Activated T-helper 1 cell treated with anti-CD3 and anti-CD28 coated beads, Interleukin-12 subunit alpha, Interleukin-12 subunit beta, Interleukin-2, Interleukin-4 antibody, amounts not matched to agents 30 ng/mL and 10 ng/mL and 1 ng/mL, durations not matched to agents 14 hours and 24 hours and 36 hours (primary cell): ENCODE measurements at regions of chr20 and their contacts with region 1.

Region 1: GRCh38 chr20:45752746-45753145 is 30.6 kb downstream of the SPINT4 start:
- DNase-seq: no peak
- H3K4me3 Mint-ChIP-seq: no peak overlapping the region
- H3K27ac Mint-ChIP-seq: peak overlapping the region; percentile 85
- H3K4me1 Mint-ChIP-seq: peaks cover 17% of the 10 kb centered on the region
- H3K27me3 Mint-ChIP-seq: peaks cover 7% of the 10 kb centered on the region

Region 2: DNA sequence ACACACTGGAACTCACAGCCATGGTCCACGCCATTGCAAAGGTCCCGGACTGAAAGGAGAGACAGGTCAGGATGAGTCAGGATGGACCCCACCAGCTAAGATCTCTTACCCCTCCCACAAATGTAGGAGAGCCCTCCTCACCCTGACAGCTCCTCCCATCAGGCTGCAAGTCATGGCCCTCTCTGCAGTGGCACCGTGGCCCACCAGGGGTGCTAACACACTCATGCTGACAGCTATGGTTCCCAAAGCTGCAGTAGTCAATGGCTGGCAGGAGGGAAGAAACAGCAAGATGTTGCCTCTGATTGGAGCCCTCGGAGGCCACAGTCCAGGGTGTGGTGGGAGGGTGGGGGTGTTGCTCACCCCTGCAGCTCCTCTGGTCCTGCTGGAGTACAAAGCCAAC is 451.8 kb before region 1 on chr20:
- intact Hi-C with region 1: loop called (anchors 10 kb)
- DNase-seq: no peak
- H3K4me3 Mint-ChIP-seq: no peak overlapping the region
- H3K27ac Mint-ChIP-seq: no peak overlapping the region
- H3K4me1 Mint-ChIP-seq: peaks cover 49% of the 10 kb centered on the region
- H3K27me3 Mint-ChIP-seq: no peaks in the 10 kb centered on the region

Region 3: DNA sequence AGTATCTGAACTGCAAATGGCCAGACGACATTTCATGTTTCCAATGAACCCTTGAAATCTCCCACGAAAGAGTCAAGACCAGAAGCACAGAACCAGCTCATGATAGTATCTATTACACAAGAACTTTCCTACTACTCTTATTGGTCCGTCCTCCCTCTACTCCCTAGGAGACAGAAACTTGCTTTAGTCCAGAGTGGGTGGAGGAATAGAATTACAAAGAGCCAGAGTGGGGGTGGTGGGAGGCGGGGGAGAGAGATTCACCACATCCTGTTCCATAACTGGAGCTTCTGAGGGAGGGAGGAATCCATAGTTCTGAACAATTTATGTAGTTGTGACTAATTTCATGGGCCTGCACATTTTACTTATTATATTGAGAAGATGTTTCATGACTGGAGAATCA is 141.7 kb before region 1 on chr20:
- intact Hi-C with region 1: loop called (anchors 1 kb)
- DNase-seq: no peak
- H3K4me3 Mint-ChIP-seq: no peak overlapping the region
- H3K27ac Mint-ChIP-seq: peak overlapping the region; percentile 36
- H3K4me1 Mint-ChIP-seq: peaks cover 20% of the 10 kb centered on the region
- H3K27me3 Mint-ChIP-seq: no peaks in the 10 kb centered on the region

Region 4: DNA sequence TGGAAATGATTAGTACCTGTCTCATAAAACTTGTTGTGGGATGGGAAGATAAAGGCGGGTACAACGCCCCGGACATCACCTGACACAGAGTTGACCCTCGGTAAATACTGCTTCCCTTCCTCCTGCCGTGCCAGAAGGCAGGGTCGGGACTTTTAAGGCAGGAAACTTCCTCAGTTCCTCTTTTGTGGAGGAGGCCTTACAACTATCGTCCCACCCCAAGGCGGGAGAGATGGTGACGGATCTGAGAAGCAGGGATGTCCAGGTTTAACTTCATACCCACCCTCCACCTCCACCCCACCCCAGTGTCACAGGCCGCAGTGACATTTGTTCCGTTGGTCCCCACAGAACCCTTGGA is 39.6 kb after region 1 on chr20:
- intact Hi-C with region 1: loop called (anchors 2 kb)
- DNase-seq: no peak
- H3K4me3 Mint-ChIP-seq: peak overlapping the region; percentile 82
- H3K27ac Mint-ChIP-seq: peak overlapping the region; percentile 89
- H3K4me1 Mint-ChIP-seq: peaks cover 24% of the 10 kb centered on the region
- H3K27me3 Mint-ChIP-seq: peaks cover 3% of the 10 kb centered on the region

Region 5: GRCh38 chr20:45867819-45868176 is 115.1 kb after region 1 on chr20:
- intact Hi-C with region 1: no loop called
- DNase-seq: no peak
- H3K4me3 Mint-ChIP-seq: no peak overlapping the region
- H3K27ac Mint-ChIP-seq: no peak overlapping the region
- H3K4me1 Mint-ChIP-seq: no peaks in the 10 kb centered on the region
- H3K27me3 Mint-ChIP-seq: no peaks in the 10 kb centered on the region